Ovary (tissue), 10 donors: ENCODE measurements at regions of chr6 and their contacts with region 1.

Region 1: DNA sequence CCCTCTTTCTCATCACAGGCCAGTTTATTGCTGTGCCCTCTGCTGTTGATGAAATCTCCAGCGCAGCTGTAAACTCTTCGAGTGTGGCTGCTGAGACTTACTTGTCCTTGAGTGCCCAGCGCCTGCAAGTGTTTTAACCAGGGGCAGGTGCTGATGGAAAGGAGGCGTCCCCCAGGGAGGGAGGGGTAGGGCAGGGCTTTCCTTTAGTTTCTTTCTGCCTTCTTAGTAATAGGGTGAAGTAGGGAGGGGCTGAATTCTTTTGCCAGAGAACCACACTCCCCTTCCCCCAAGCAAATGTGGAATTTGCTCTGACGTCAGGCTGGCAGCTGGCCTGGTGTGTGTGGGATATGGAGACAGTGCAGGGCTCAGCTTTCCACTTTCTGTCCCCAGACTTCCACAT is 61.2 kb downstream of the IGF2R start:
- DNase-seq: peak; percentile 91 to 93 (median 91)
- H3K4me3 ChIP-seq: no peak overlapping the region
- H3K27ac ChIP-seq: peak overlapping the region; percentile 13 to 66
- H3K4me1 ChIP-seq: peaks cover 4% of the 10 kb centered on the region
- H3K27me3 ChIP-seq: no peaks in the 10 kb centered on the region
- CTCF ChIP-seq: no peak
- EP300 ChIP-seq: no peak
- POLR2A ChIP-seq: no peak

Region 2: DNA sequence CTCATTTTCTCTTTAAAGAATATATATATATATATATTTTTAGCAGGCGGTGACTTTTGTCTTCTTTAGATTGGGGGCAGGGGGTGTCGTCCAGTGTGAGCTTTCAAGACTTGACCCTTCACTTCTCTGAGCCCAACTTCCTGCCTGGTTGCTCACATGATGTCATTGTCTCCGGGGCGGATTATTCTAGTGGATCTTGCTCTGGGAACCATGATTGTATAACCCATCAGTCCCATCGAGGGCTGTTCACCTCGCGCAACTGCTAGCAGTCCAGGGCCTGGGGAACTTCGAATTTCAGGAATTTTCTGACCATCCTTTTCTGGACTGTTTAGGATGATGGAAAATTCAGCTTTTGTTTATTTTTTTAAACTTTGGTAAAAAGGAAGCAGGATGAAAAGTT is 60.2 kb before region 1 on chr6:
- intact Hi-C with region 1: loop called in 2 of 4 experiments (anchors 10 kb)
- DNase-seq: peak in 3 of 5 donors; percentile 52 to 73 (median 57)
- H3K4me3 ChIP-seq: peak overlapping the region; percentile 96
- H3K27ac ChIP-seq: peak overlapping the region; percentile 89 to 90
- H3K4me1 ChIP-seq: peaks cover 16% of the 10 kb centered on the region
- H3K27me3 ChIP-seq: no peaks in the 10 kb centered on the region
- CTCF ChIP-seq: no peak
- EP300 ChIP-seq: no peak
- POLR2A ChIP-seq: no peak

Region 3: DNA sequence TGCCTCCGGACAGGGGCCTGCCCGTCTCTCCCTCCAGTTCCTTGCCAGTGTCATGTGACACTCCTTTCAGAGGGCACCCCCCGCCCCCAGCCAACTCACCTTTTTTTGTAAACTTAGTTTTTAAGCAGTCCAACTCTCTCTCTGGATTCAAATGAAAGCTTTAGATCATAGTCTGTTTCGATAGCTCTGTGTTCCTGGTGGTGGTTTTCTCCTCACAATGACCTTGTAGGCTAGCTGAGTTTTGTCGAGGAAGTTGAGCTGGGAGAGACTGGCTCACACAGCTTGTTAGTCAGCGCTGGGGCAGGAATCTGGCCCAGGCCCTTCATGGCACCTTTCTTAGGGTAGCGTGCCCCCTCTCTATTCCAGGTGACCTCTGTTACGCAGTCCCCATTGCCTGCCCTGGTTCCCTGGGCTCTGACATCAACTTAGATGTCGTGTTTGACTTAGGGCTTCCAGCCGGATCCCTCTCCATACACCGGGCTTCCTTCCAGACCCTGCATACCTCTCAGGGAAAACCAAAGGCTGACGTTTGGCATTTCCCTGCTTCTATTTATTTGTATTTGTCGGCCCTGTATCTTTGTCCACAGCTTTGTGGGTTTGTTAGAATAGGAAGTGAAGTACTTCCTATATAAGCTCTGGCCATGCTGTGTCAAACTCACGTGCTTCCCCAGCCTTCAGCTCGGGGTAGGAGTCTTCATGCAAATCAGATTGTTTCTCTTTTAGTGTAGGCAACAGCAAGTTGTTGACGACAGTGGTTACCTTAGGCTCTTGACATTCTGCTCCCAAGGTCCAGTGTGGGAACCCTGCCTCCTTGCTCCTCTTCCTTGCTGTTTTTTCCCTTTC is 48.5 kb before region 1 on chr6:
- intact Hi-C with region 1: loop called in 3 of 4 experiments (anchors 10 kb)
- DNase-seq: peak in 2 of 5 donors; percentile 28 to 47
- H3K4me3 ChIP-seq: peak overlapping the region; percentile 18
- H3K27ac ChIP-seq: peak overlapping the region; percentile 8 to 73
- H3K4me1 ChIP-seq: peaks cover 57% of the 10 kb centered on the region
- H3K27me3 ChIP-seq: no peaks in the 10 kb centered on the region
- CTCF ChIP-seq: no peak
- EP300 ChIP-seq: no peak
- POLR2A ChIP-seq: no peak

Region 4: GRCh38 chr6:160147146-160147536 is 117.0 kb after region 1 on chr6:
- intact Hi-C with region 1: no loop called
- DNase-seq: no peak
- H3K4me3 ChIP-seq: no peak overlapping the region
- H3K27ac ChIP-seq: no peak overlapping the region
- H3K4me1 ChIP-seq: no peaks in the 10 kb centered on the region
- H3K27me3 ChIP-seq: no peaks in the 10 kb centered on the region
- CTCF ChIP-seq: no peak
- EP300 ChIP-seq: no peak
- POLR2A ChIP-seq: no peak